Activated CD4-positive, alpha-beta T cell treated with anti-CD3 and anti-CD28 coated beads for 36 hours (primary cell): ENCODE measurements at regions of chr3 and their contacts with region 1.

Region 1: GRCh38 chr3:48556793-48557626 is at the start of gene PFKFB4:
- DNase-seq: peak; percentile 100
- ATAC-seq: peak; percentile 91
- H3K4me3 Mint-ChIP-seq: peak within 1 kb of the TSS; percentile 87
- H3K27ac Mint-ChIP-seq: peak within 1 kb of the TSS; percentile 93
- H3K4me1 Mint-ChIP-seq: peaks cover 23% of the 10 kb centered on the region
- H3K27me3 Mint-ChIP-seq: no peaks in the 10 kb centered on the region
- total RNA-seq, gene PFKFB4: 58.4 to 63.7 TPM

Region 2: GRCh38 chr3:47781685-47782445 is 775.1 kb before region 1 on chr3 and contains the start of gene SMARCC1:
- CTCF ChIA-PET with region 1: no interaction called
- POLR2A ChIA-PET with region 1: interaction called, 3 read pairs
- intact Hi-C with region 1: loop called in 1 of 2 experiments (anchors 1 kb)
- DNase-seq: peak; percentile 99
- ATAC-seq: peak; percentile 93
- H3K4me3 Mint-ChIP-seq: peak within 1 kb of the TSS; percentile 99
- H3K27ac Mint-ChIP-seq: peak within 1 kb of the TSS; percentile 97
- H3K4me1 Mint-ChIP-seq: peaks cover 21% of the 10 kb centered on the region
- H3K27me3 Mint-ChIP-seq: no peaks in the 10 kb centered on the region
- total RNA-seq, gene SMARCC1: 129 to 130 TPM

Region 3: DNA sequence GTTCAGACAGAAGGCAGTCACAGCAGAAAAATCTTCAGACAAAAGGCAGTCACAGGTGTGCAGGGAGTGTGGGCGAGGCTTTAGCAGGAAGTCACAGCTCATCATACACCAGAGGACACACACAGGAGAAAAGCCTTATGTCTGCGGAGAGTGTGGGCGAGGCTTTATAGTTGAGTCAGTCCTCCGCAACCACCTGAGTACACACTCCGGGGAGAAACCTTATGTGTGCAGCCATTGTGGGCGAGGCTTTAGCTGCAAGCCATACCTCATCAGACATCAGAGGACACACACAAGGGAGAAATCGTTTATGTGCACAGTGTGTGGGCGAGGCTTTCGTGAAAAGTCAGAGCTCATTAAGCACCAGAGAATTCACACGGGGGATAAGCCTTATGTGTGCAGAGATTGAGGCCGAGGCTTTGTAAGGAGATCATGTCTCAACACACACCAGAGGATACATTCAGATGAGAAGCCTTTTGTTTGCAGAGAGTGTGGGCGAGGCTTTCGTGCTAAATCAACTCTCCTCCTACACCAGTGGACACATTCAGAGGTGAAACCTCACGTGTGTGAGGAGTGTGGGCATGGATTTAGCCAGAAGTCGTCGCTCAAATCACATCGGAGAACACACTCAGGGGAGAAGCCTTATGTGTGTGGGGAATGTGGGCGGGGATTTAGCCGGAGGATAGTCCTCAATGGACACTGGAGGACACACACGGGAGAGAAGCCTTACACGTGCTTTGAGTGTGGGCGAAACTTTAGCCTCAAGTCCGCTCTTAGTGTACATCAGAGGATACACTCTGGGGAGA is 288.4 kb before region 1 on chr3:
- CTCF ChIA-PET with region 1: no interaction called
- POLR2A ChIA-PET with region 1: no interaction called
- intact Hi-C with region 1: loop called (anchors 1 to 10 kb)
- DNase-seq: peak; percentile 95
- ATAC-seq: peak; percentile 91
- H3K4me3 Mint-ChIP-seq: peak overlapping the region; percentile 57
- H3K27ac Mint-ChIP-seq: peak overlapping the region; percentile 92
- H3K4me1 Mint-ChIP-seq: peaks cover 39% of the 10 kb centered on the region
- H3K27me3 Mint-ChIP-seq: no peaks in the 10 kb centered on the region

Region 4: DNA sequence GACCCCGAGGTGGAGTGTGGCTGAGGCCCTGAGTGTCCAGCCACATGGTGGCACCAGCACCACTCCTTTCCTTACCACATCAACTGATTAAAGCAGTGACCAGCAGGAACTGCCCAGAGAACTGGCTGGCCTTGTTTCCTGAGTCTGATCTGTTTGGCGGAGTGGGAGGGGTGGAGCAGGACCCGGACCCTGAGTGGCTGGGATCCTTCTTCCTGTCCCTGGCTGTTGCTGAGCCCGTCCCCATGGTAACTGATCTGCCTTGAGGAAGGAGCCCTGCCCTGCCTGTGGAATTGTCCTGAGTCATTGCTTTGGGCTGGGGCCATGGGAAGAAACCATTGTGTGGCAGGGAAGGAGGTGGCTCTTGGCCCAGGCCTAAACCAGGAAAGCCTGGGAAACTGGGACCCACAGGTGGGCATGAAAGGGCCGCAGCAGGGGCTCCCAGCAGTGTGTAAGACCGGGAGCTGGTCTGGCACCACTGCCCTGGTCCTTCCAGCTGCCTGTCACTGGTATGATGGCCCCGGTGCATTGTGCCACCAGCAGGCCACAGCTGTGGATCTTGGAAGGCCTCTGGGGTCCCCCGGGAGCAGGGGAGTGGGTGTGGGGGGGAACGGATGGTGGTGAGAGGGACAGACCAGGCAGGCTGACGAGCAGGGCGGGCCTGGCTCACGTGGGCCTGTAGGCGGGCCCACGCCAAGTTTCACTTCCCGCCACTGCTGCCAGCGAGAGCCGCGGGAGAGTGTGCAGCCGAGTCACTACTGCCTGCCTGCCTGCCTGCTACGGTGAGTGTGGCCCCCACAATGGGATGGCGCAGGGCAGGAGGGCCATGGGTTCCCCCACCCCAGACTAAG is 91.3 kb before region 1 on chr3:
- CTCF ChIA-PET with region 1: interaction called, 3 read pairs
- POLR2A ChIA-PET with region 1: interaction called, 5 read pairs
- intact Hi-C with region 1: loop called in 1 of 2 experiments (anchors 1 kb)
- DNase-seq: peak; percentile 90
- ATAC-seq: peak; percentile 92
- H3K4me3 Mint-ChIP-seq: peak overlapping the region; percentile 93
- H3K27ac Mint-ChIP-seq: peak overlapping the region; percentile 96
- H3K4me1 Mint-ChIP-seq: peaks cover 46% of the 10 kb centered on the region
- H3K27me3 Mint-ChIP-seq: no peaks in the 10 kb centered on the region

Region 5: GRCh38 chr3:48635222-48636021 is 78.4 kb after region 1 on chr3 and contains the start of gene SLC26A6:
- CTCF ChIA-PET with region 1: interaction called, 16 read pairs
- POLR2A ChIA-PET with region 1: no interaction called
- intact Hi-C with region 1: loop called (anchors 1 kb)
- DNase-seq: peak; percentile 97
- ATAC-seq: peak; percentile 97
- H3K4me3 Mint-ChIP-seq: peak within 1 kb of the TSS; percentile 84
- H3K27ac Mint-ChIP-seq: peak within 1 kb of the TSS; percentile 76
- H3K4me1 Mint-ChIP-seq: peaks cover 13% of the 10 kb centered on the region
- H3K27me3 Mint-ChIP-seq: no peaks in the 10 kb centered on the region
- total RNA-seq, gene SLC26A6: 35.0 to 38.5 TPM

Region 6: DNA sequence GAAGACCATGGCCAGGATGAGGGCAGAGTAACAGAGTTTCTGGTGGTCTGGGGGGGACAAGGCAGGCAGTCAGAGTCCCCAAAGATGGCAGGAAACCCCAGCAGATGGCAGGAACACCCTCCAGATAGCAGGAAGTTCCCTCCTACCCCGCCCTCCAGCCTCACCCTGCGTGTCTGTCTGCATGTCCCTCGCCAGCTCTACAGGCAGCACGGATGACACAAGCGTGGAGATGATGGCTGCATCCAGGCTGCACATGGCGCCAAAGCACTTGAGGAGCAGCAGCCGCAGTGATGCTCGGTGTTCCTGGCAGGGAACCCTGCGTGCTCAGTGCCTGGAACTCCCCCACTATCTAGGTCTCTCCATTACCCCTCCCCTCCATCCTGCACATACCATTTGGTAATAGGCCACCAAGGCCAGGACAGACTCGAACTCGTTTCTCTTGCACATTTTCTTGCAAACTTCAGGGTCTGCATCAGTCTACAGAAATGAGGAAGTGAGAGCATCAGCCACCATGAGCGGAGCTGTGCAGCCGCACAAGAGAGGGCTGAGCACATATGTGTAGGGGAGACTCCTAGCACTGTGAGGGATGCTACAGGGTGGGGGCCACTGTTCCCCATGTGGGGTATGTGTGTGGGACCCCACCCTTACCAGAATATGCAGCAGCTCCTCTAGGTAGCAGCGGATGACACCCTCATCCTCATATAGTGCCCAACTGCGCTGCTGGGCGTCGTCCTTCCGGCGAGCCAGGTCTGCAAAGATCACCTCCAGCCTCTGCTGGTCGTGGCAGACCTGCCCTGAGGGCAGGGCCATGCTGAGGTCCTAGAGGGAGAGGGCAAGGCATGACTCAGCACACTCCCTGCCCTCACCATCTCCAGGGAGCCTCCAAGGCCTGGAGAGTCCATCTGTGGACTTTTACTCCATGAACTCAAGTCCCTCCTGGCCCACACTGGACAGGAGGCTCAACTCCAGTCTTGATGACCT is 122.7 kb after region 1 on chr3:
- CTCF ChIA-PET with region 1: no interaction called
- POLR2A ChIA-PET with region 1: no interaction called
- intact Hi-C with region 1: no loop called
- DNase-seq: no peak
- ATAC-seq: no peak
- H3K4me3 Mint-ChIP-seq: no peak overlapping the region
- H3K27ac Mint-ChIP-seq: no peak overlapping the region
- H3K4me1 Mint-ChIP-seq: peaks cover 10% of the 10 kb centered on the region
- H3K27me3 Mint-ChIP-seq: no peaks in the 10 kb centered on the region

Region 7: GRCh38 chr3:48727511-48727910 is 170.5 kb after region 1 on chr3:
- CTCF ChIA-PET with region 1: no interaction called
- POLR2A ChIA-PET with region 1: no interaction called
- intact Hi-C with region 1: no loop called
- DNase-seq: no peak
- ATAC-seq: no peak
- H3K4me3 Mint-ChIP-seq: no peak overlapping the region
- H3K27ac Mint-ChIP-seq: no peak overlapping the region
- H3K4me1 Mint-ChIP-seq: no peaks in the 10 kb centered on the region
- H3K27me3 Mint-ChIP-seq: no peaks in the 10 kb centered on the region

Region 8: DNA sequence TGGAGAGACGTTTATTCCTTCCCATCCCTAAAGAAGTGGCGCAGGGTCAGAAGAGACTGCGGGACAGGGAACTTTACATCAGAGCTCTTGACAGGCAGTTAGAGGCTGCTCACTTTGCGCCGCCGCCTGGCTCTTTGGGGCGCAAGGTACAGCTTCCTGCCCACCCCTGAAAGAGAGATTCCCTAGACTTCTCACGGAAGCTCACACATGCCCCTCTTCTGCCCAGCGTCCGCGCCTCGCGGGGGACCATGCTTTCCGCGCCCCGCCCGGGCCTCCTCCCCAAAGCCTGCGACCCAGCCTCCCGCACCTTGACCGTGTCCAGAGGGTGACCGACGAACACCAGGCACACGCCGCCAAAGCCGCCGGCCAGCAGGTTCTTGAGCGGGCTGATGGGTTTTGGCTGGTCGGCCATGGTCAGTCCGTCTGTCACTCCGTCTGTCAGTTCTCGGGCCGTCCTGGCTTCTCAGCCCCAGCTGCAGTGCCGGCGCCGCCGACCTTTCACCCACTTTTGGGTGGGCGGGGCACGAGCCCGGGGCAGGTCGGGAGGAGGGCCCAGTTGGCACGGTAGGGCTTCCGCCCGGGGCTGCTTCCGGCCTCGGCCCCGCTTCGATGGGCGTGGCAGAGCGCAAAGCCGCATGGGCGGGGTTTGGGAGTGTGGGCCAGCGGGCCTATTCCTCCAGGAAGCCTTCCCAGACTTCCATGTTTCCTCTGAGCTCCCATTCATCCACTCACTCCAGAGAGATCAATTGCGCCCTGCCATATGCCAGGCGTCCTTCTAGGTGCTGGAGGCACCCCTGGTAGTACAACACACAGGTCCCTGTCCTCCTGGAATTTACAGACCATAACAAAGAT is 341.6 kb after region 1 on chr3 and contains the start of gene SLC25A20:
- CTCF ChIA-PET with region 1: no interaction called
- POLR2A ChIA-PET with region 1: no interaction called
- intact Hi-C with region 1: loop called in 1 of 2 experiments (anchors 2 kb)
- DNase-seq: peak; percentile 96
- ATAC-seq: peak; percentile 96
- H3K4me3 Mint-ChIP-seq: peak within 1 kb of the TSS; percentile 90
- H3K27ac Mint-ChIP-seq: peak within 1 kb of the TSS; percentile 92
- H3K4me1 Mint-ChIP-seq: peaks cover 30% of the 10 kb centered on the region
- H3K27me3 Mint-ChIP-seq: no peaks in the 10 kb centered on the region
- total RNA-seq, gene SLC25A20: 15.8 to 18.5 TPM

Region 9: DNA sequence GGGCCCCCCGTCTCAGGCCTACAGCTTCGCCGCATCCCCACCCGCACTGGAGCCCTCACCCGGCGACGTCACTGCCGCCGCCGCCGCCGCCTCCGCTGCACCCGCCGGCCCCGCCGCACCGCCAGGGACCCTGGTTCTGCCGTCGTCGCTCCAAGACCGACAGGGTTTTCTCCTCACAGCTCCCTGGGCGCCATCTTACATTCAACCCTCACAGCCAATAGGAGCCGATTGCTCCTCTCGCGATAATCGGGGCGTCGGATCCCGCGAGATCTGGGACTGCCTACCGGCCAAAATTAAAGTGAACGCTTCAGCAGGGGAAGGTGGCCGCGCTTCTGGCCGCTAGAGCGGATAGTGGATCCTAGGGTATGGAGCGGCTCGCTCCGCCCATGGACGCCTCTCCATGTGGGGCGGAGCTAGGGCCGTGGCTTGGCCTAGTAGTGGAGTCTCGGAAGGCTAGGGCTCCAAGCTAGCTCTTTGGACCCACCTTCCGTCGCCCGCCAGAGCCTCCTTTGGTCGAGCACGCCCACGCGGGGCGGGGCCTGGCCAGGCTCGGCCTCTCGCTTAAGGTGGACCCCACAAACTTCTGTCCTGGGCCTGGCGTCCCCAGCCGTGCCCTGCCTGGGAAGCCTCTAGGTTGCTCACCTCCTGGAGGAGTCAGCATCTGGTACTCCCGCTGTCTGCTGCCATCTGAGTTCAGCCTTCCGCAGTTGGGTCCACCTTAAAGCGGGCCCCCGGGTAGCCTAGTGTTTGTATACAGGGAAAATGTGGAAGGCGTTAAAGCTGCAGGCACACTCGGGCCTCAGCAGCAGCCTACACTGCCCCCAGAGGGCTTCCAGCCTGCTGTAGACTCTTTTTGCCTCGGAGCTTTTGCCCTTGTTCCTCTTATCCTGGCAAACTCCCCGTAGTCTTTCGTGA is 537.1 kb after region 1 on chr3 and contains the start of gene QRICH1:
- CTCF ChIA-PET with region 1: no interaction called
- POLR2A ChIA-PET with region 1: no interaction called
- intact Hi-C with region 1: loop called (anchors 1 to 5 kb)
- DNase-seq: peak; percentile 98
- ATAC-seq: peak; percentile 86
- H3K4me3 Mint-ChIP-seq: peak within 1 kb of the TSS; percentile 90
- H3K27ac Mint-ChIP-seq: peak within 1 kb of the TSS; percentile 94
- H3K4me1 Mint-ChIP-seq: peaks cover 33% of the 10 kb centered on the region
- H3K27me3 Mint-ChIP-seq: no peaks in the 10 kb centered on the region
- total RNA-seq, gene QRICH1: 119 to 171 TPM